A673 (cell line): ENCODE measurements at regions of chr11 and their contacts with region 1.

Region 1: GRCh38 chr11:86949995-86950660 is 5.1 kb downstream of the FZD4 start:
- DNase-seq: no peak
- H3K4me3 ChIP-seq: peak overlapping the region; percentile 90
- H3K27ac ChIP-seq: peak overlapping the region; percentile 68
- H3K4me1 ChIP-seq: peaks cover 73% of the 10 kb centered on the region
- H3K27me3 ChIP-seq: no peaks in the 10 kb centered on the region
- CTCF ChIP-seq: no peak

Region 2: GRCh38 chr11:86938900-86939880 is 10.9 kb before region 1 on chr11:
- CTCF ChIA-PET with region 1: no interaction called
- POLR2A ChIA-PET with region 1: interaction called, 13 read pairs
- intact Hi-C with region 1: no loop called
- DNase-seq: peak; percentile 90
- H3K4me3 ChIP-seq: peak overlapping the region; percentile 19
- H3K27ac ChIP-seq: peak overlapping the region; percentile 97
- H3K4me1 ChIP-seq: peaks cover 85% of the 10 kb centered on the region
- H3K27me3 ChIP-seq: no peaks in the 10 kb centered on the region
- CTCF ChIP-seq: peak; percentile 76

Region 3: GRCh38 chr11:87193756-87194470 is 243.8 kb after region 1 on chr11:
- CTCF ChIA-PET with region 1: no interaction called
- POLR2A ChIA-PET with region 1: no interaction called
- intact Hi-C with region 1: no loop called
- DNase-seq: peak; percentile 41
- H3K4me3 ChIP-seq: no peak overlapping the region
- H3K27ac ChIP-seq: peak overlapping the region; percentile 99
- H3K4me1 ChIP-seq: peaks cover 85% of the 10 kb centered on the region
- H3K27me3 ChIP-seq: no peaks in the 10 kb centered on the region
- CTCF ChIP-seq: no peak